CD4-positive, alpha-beta memory T cell (primary cell): ENCODE measurements at regions of chr15 and their contacts with region 1.

Region 1: GRCh38 chr15:45205192-45205591 is 17.4 kb upstream of the SHF start:
- DNase-seq: peak; percentile 50 to 71 (median 55)
- H3K4me3 ChIP-seq: no peak overlapping the region
- H3K4me3 Mint-ChIP-seq: peak overlapping the region in 2 of 8 donors; percentile 44 to 48
- H3K27ac ChIP-seq: no peak overlapping the region
- H3K27ac Mint-ChIP-seq: peak overlapping the region in 3 of 7 donors; percentile 19 to 62 (median 53)
- H3K4me1 ChIP-seq: peaks cover 8% of the 10 kb centered on the region
- H3K4me1 Mint-ChIP-seq: peaks cover 0 to 7% (median 3%) of the 10 kb centered on the region in 4 donors
- H3K27me3 ChIP-seq: no peaks in the 10 kb centered on the region
- H3K27me3 Mint-ChIP-seq: peaks cover 12 to 15% of the 10 kb centered on the region in 2 donors

Region 2: GRCh38 chr15:45179221-45179985 is 25.8 kb before region 1 on chr15:
- CTCF ChIA-PET with region 1: interaction called, 19 read pairs
- POLR2A ChIA-PET with region 1: interaction called, 201 read pairs
- intact Hi-C with region 1: no loop called
- DNase-seq: peak; percentile 33 to 54 (median 42)
- H3K4me3 ChIP-seq: no peak overlapping the region
- H3K4me3 Mint-ChIP-seq: no peak overlapping the region
- H3K27ac ChIP-seq: no peak overlapping the region
- H3K27ac Mint-ChIP-seq: peak overlapping the region in 1 of 7 donors; percentile 73
- H3K4me1 ChIP-seq: no peaks in the 10 kb centered on the region
- H3K4me1 Mint-ChIP-seq: peaks cover 4 to 10% (median 8%) of the 10 kb centered on the region in 4 donors
- H3K27me3 ChIP-seq: no peaks in the 10 kb centered on the region
- H3K27me3 Mint-ChIP-seq: no peaks in the 10 kb centered on the region

Region 3: GRCh38 chr15:45187894-45188830 is 17.0 kb before region 1 on chr15 and contains the start of gene SHF:
- CTCF ChIA-PET with region 1: interaction called, 18 read pairs
- POLR2A ChIA-PET with region 1: interaction called, 201 read pairs
- intact Hi-C with region 1: no loop called
- DNase-seq: peak; percentile 49 to 78 (median 56)
- H3K4me3 ChIP-seq: peak within 1 kb of the TSS; percentile 67 to 90
- H3K4me3 Mint-ChIP-seq: peak within 1 kb of the TSS; percentile 86 to 97 (median 93)
- H3K27ac ChIP-seq: peak within 1 kb of the TSS; percentile 66
- H3K27ac Mint-ChIP-seq: peak within 1 kb of the TSS; percentile 77 to 95 (median 94)
- H3K4me1 ChIP-seq: peaks cover 7% of the 10 kb centered on the region
- H3K4me1 Mint-ChIP-seq: peaks cover 9 to 23% (median 13%) of the 10 kb centered on the region in 4 donors
- H3K27me3 ChIP-seq: no peaks in the 10 kb centered on the region
- H3K27me3 Mint-ChIP-seq: no peaks in the 10 kb centered on the region
- total RNA-seq, gene SHF: 5.3 to 6.7 TPM